H1 (cell line): ENCODE measurements at regions of chr3 and their contacts with region 1.

Region 1: DNA sequence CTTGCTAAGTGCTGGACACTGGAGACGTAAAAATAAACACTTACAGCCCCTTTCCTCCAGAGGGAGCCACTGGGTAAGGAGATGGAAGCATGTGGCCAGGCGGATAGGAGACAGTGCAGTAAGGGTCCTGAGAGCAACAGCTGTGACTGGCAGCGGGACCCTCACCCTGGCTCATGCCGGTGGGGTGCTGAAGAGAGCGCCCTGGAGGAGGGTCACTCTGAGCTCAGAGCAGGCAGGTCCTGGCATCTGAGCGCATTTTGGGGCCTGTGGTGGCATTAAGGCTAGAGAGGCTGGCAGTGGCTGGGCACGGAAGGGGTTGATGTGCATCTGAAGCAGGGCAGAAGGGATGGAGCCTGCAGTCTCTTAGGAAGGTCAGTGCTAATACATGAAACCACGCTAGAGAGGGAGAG is 16.0 kb downstream of the SEC61A1 start:
- DNase-seq: peak in 1 of 2 experiments; percentile 58
- H3K4me3 ChIP-seq: no peak overlapping the region
- H3K27ac ChIP-seq: no peak overlapping the region
- H3K4me1 ChIP-seq: no peaks in the 10 kb centered on the region
- H3K27me3 ChIP-seq: no peaks in the 10 kb centered on the region
- CTCF ChIP-seq: peak in 2 of 3 experiments; percentile 64 to 72; a peak in 3 of 4 replicates
- EP300 ChIP-seq: no peak
- POLR2A ChIP-seq: no peak
- RAD21 ChIP-seq: peak; percentile 49 to 59

Region 2: DNA sequence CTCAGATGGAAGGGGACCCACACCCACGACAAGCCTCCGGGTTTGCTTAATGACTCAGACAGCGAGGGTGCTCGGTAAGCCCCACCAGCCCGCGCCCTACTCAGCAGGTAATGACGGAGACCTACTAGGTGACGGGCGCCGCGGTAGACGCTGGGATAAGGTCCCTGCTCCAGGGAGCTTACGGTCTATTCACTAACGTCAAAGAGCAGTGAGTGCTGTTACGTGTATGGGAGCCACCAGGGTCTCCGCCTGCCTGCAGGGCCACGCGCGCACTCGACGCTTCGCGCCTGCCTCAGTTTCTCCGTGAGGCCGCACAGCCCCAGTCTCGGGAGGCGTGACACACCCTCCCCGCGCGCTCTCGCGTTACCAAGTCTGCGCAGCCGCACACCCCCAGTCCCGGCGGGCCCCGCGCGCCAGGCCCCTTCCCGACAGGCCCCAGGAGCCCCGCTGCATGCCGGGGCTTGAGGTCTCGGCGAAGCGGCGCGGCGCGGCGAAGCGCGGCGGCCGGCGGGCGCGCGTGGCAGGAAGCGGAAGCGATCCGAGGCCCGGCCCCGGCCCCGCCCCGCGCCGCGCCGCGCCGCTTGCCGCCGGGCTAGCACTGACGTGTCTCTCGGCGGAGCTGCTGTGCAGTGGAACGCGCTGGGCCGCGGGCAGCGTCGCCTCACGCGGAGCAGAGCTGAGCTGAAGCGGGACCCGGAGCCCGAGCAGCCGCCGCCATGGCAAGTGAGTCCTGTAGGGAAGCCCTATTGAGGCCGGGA is 16.2 kb before region 1 on chr3 and contains the start of gene SEC61A1:
- CTCF ChIA-PET with region 1: interaction called, 62 read pairs
- POLR2A ChIA-PET with region 1: interaction called, 10 read pairs
- DNase-seq: peak; percentile 67 to 96
- H3K4me3 ChIP-seq: peak within 1 kb of the TSS; percentile 82 to 92 (median 86)
- H3K27ac ChIP-seq: 0 out of 2 replicates have a peak within 1 kb of the TSS, but pooled peaks have one; percentile 35
- H3K4me1 ChIP-seq: peaks cover 0 to 7% (median 2%) of the 10 kb centered on the region in 4 experiments; a peak in 4 of 7 replicates
- H3K27me3 ChIP-seq: no peaks in the 10 kb centered on the region
- CTCF ChIP-seq: no peak
- EP300 ChIP-seq: no peak
- POLR2A ChIP-seq: no peak; a peak in 1 of 3 replicates
- RAD21 ChIP-seq: no peak
- total RNA-seq, gene SEC61A1: 157 and 165 TPM in 2 replicates